ENCODE measurements at regions of chr2 and their contacts with region 1.

Region 1: DNA sequence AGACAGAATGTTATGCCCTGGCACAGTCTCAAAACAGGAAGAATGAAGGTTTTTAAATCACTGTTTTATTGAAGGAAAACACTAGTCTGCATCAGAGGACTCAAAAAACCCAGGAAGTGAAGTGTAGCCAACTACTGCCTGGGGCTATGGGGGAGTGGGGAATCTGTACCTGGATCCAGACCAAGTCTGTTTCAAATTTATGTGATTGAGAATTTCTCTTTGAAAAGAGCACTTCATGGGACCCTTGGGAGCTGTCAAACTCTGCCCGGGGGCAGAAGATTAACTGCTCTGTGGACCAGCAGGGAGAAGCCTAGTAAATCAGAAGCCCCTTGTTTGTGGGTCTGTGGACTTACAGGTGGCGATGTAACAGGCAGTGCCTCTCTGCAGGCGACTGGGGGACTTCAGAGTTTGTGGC is 45.3 kb upstream of the TANC1 start:
- DNase-seq: no peak
- ATAC-seq: peak; percentile 28
- H3K4me3 ChIP-seq: no peak overlapping the region
- H3K27ac ChIP-seq: no peak overlapping the region
- H3K4me1 ChIP-seq: peaks cover 9% of the 10 kb centered on the region
- H3K27me3 ChIP-seq: no peaks in the 10 kb centered on the region
- CTCF ChIP-seq: no peak
- POLR2A ChIP-seq: no peak
- RAD21 ChIP-seq: no peak

Region 2: DNA sequence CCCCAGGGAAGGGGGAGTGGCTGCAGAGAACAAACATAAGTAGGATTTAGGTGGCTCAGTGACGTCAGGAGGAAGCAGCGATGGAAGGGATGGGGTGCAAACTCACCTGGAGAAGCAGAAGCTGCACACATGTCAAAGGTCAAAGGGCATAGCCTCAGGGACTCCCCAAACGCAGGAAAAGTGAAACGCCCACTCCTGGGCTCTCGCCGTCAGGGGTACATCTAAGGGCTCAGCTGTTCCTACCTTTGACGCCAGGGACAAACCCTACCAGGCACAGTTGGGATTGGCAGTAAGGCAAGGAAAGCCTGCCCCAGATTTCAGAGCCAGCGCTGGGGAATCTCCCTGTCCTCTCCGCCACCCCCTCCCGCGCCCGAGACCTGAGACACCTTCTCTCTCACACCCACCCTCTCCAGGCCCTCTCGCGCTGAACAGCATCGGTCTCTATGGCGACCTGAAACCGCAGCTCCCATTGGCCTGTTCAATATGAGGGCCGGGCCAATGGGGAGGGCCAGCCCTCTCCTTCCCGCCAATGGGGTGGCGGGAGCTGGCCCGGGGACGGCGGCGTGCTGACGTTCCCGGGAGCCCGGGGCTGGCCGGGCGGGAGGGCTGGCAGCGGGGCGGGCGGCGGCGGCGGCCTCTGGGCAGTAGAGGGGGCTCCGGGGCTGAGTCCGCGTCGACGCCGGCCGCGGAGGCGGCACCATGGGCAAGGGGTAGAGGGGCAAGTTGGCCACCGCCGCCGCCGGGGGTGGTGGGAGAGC is 466.7 kb before region 1 on chr2 and contains the starts of genes CCDC148 and PKP4:
- CTCF ChIA-PET with region 1: no interaction called
- POLR2A ChIA-PET with region 1: no interaction called
- dilution Hi-C with region 1: no loop called
- in situ Hi-C with region 1: no loop called
- intact Hi-C with region 1: no loop called
- DNase-seq: peak; percentile 89
- ATAC-seq: peak; percentile 92
- H3K4me3 ChIP-seq: peak within 1 kb of the TSS; percentile 90
- H3K27ac ChIP-seq: peak within 1 kb of the TSS; percentile 76
- H3K4me1 ChIP-seq: peaks cover 2% of the 10 kb centered on the region
- H3K27me3 ChIP-seq: peaks cover 4% of the 10 kb centered on the region; the same call in 1 of the 2 replicates
- CTCF ChIP-seq: peak; percentile 33
- POLR2A ChIP-seq: 0 out of 2 replicates have a peak, but pooled peaks have one; percentile 17
- RAD21 ChIP-seq: peak; percentile 4; the same call in 1 of the 2 replicates
- total RNA-seq, gene CCDC148: 0.18 and 0.56 TPM in 2 replicates
- total RNA-seq, gene PKP4: 37.5 and 37.8 TPM in 2 replicates

Region 3: DNA sequence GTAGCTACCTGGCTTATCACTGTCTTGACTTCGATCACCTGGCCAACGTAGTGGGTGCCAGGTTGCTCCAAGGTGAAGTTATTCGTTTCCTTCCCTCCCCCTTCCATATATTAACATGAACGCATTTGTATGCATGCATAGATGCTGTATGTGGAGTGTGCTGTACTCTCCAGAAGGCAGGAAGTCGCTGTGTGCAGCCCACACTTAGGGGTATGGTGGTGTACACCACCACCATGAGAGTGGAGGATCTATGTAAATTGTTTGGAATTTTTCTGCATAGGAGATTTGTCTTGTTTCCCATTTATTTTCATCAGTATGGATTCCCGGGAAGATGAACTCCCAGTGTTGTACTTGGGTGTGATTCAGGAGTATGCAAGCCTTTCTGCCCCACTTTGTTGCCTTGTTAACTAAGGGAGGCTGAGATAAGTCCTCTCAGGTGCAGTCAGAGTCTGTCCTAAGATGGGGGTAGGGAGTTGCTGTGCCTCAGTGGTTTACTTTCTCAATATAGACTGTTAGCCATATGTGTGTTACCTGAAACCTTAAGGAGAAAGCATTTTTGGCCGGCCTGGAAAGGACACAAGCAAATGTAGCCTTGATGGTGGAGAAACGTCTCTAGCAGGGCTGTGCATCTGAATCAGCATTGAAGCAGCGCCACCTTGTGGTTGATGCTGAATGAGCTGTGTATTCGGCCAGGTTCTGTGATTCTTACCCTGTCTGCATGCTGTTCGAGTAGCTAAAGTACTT is 195.1 kb after region 1 on chr2:
- CTCF ChIA-PET with region 1: no interaction called
- POLR2A ChIA-PET with region 1: no interaction called
- dilution Hi-C with region 1: loop called (anchors 25 kb)
- in situ Hi-C with region 1: no loop called
- intact Hi-C with region 1: no loop called
- DNase-seq: peak; percentile 88
- ATAC-seq: peak; percentile 97
- H3K4me3 ChIP-seq: no peak overlapping the region
- H3K27ac ChIP-seq: no peak overlapping the region
- H3K4me1 ChIP-seq: peaks cover 12% of the 10 kb centered on the region
- H3K27me3 ChIP-seq: no peaks in the 10 kb centered on the region
- CTCF ChIP-seq: peak; percentile 92
- POLR2A ChIP-seq: peak; percentile 51; the same call in 1 of the 2 replicates
- RAD21 ChIP-seq: peak; percentile 99

Region 4: DNA sequence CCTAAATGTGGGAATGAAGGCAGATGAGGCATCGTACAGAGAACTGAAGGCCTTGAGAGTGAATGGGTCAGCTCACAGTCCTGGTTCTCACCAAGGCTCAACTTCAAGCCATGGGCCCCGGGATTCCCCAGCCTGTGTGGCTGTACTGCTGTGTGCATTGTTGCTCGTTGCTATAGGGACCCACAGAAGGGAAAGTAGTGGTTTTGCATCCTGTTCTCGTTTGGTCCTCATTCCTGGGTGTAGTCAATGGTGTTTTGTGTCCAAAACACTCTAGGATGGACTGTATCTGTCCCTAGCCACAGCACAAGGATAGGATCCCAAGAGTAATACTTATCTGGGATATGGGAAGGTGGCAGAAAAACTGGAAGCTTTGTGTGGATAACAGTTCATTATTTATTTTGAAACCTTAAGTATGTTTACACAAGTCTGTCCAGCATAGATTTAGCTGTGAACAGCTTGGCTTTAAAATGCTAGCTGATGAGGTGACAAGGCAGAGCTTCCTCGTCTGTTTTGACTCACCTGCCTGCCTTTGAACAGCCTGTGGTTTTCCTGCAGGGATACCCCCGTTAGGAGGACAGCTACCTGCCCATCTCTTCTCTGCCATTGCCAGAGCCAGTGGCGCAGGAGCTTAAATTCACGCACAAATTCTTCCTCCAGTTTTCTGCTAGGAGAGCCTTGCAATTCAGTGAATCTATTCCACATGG is 278.3 kb after region 1 on chr2:
- CTCF ChIA-PET with region 1: no interaction called
- POLR2A ChIA-PET with region 1: no interaction called
- dilution Hi-C with region 1: no loop called
- in situ Hi-C with region 1: no loop called
- intact Hi-C with region 1: no loop called
- DNase-seq: peak; percentile 78
- ATAC-seq: peak; percentile 5; the same call in 1 of the 2 replicates
- H3K4me3 ChIP-seq: no peak overlapping the region
- H3K27ac ChIP-seq: no peak overlapping the region
- H3K4me1 ChIP-seq: peaks cover 13% of the 10 kb centered on the region
- H3K27me3 ChIP-seq: no peaks in the 10 kb centered on the region
- CTCF ChIP-seq: no peak
- POLR2A ChIP-seq: no peak; the same call in 1 of the 2 replicates
- RAD21 ChIP-seq: no peak

Measured in IMR-90 (cell line).